ENCODE measurements at regions of chr2 and their contacts with region 1.

Region 1: GRCh38 chr2:197804049-197804757 is at the start of gene PLCL1:
- DNase-seq: peak; percentile 73 to 94 (median 91)
- ATAC-seq: peak; percentile 98
- H3K4me3 ChIP-seq: peak within 1 kb of the TSS; percentile 67
- H3K4me3 Mint-ChIP-seq: peak within 1 kb of the TSS; percentile 92 to 98 (median 96)
- H3K27ac ChIP-seq: peak within 1 kb of the TSS; percentile 89
- H3K27ac Mint-ChIP-seq: peak within 1 kb of the TSS; percentile 58 to 96 (median 92)
- H3K4me1 ChIP-seq: peaks cover 10 to 29% of the 10 kb centered on the region in 2 donors
- H3K4me1 Mint-ChIP-seq: peaks cover 33 to 55% (median 48%) of the 10 kb centered on the region in 7 donors
- H3K27me3 ChIP-seq: peaks cover 0 to 6% of the 10 kb centered on the region in 2 donors
- H3K27me3 Mint-ChIP-seq: peaks cover 0 to 49% (median 0%) of the 10 kb centered on the region in 5 donors
- total RNA-seq, gene PLCL1: 1.8 to 33.7 (median 28.5) TPM

Region 2: DNA sequence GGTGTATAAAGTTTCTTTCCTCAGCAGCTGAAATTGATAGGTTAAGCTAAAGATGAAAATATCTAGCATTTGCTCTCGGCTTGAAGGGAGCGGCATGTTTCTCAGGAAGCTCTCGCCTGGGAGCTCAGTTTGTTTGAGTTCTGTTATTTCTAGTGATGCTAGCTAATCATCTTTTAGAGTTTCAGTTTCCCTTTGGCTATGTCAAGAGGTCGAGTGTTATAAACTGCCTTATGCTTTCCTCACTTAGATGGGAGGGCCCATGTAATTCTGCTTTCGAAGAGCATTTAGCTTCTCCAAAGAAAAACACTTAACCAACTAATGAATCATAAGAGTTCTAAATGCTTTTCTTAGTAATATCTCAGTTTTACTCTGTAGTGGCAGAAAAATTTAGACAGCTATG is 33.8 kb after region 1 on chr2:
- CTCF ChIA-PET with region 1: interaction called, 8 read pairs
- POLR2A ChIA-PET with region 1: interaction called, 7 read pairs
- intact Hi-C with region 1: loop called (anchors 1 kb)
- DNase-seq: peak in 7 of 9 donors; percentile 41 to 71 (median 59)
- ATAC-seq: peak; percentile 88
- H3K4me3 ChIP-seq: peak overlapping the region; percentile 31
- H3K4me3 Mint-ChIP-seq: peak overlapping the region; percentile 65 to 84 (median 80)
- H3K27ac ChIP-seq: peak overlapping the region; percentile 75
- H3K27ac Mint-ChIP-seq: peak overlapping the region; percentile 79 to 98 (median 94)
- H3K4me1 ChIP-seq: peaks cover 0 to 55% of the 10 kb centered on the region in 2 donors
- H3K4me1 Mint-ChIP-seq: peaks cover 28 to 88% (median 67%) of the 10 kb centered on the region in 7 donors
- H3K27me3 ChIP-seq: no peaks in the 10 kb centered on the region
- H3K27me3 Mint-ChIP-seq: no peaks in the 10 kb centered on the region

Region 3: DNA sequence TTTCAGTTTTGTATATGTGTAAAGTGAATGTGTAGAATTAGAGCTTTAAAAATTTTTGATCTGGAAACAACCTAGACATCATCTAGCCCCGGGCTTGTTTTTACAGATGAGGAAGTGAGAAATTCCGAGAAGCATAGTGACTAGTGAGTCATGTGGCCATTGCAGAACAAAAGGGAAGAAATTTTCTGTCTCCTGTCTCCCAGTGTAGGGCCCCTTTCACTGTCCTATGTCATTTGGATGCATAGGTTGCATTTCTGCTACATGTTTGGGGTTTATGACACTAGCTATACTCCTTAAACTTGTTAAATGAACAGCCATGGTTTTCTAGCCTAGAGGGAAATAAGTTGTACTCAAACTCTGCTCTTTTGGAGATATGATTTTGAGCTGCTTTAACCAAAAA is 84.8 kb after region 1 on chr2:
- CTCF ChIA-PET with region 1: no interaction called
- POLR2A ChIA-PET with region 1: interaction called, 6 read pairs
- intact Hi-C with region 1: loop called (anchors 1 kb)
- DNase-seq: peak in 8 of 9 donors; percentile 31 to 77 (median 60)
- ATAC-seq: peak; percentile 90
- H3K4me3 ChIP-seq: no peak overlapping the region
- H3K4me3 Mint-ChIP-seq: peak overlapping the region; percentile 26 to 88 (median 72)
- H3K27ac ChIP-seq: peak overlapping the region; percentile 72
- H3K27ac Mint-ChIP-seq: peak overlapping the region; percentile 63 to 97 (median 89)
- H3K4me1 ChIP-seq: peaks cover 0 to 49% of the 10 kb centered on the region in 2 donors
- H3K4me1 Mint-ChIP-seq: peaks cover 27 to 90% (median 71%) of the 10 kb centered on the region in 7 donors
- H3K27me3 ChIP-seq: no peaks in the 10 kb centered on the region
- H3K27me3 Mint-ChIP-seq: no peaks in the 10 kb centered on the region

Region 4: DNA sequence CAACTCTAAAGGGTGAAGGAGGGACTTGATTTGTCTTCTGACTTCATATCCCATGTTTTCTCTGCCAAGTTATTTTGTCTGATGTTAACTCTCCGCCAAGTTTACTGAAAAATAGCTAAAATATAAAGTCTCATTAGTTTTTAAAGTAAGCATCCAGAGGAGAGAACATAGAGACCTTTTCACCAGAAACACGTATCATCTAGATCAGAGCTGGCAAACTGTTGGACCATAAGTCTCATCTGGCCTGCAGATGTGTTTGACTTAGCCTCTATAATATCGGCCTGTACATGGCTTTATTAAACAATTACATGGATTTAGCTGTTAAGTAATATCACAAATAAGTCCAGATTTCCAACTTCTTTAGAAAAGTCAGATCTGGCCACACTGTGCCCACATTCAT is 182.8 kb after region 1 on chr2:
- CTCF ChIA-PET with region 1: interaction called, 14 read pairs
- POLR2A ChIA-PET with region 1: no interaction called
- intact Hi-C with region 1: loop called in 1 of 2 experiments (anchors 1 kb)
- DNase-seq: no peak
- ATAC-seq: no peak
- H3K4me3 ChIP-seq: no peak overlapping the region
- H3K4me3 Mint-ChIP-seq: no peak overlapping the region
- H3K27ac ChIP-seq: no peak overlapping the region
- H3K27ac Mint-ChIP-seq: peak overlapping the region in 1 of 9 donors; percentile 25
- H3K4me1 ChIP-seq: peaks cover 0 to 4% of the 10 kb centered on the region in 2 donors
- H3K4me1 Mint-ChIP-seq: peaks cover 0 to 55% (median 28%) of the 10 kb centered on the region in 7 donors
- H3K27me3 ChIP-seq: no peaks in the 10 kb centered on the region
- H3K27me3 Mint-ChIP-seq: no peaks in the 10 kb centered on the region

Region 5: DNA sequence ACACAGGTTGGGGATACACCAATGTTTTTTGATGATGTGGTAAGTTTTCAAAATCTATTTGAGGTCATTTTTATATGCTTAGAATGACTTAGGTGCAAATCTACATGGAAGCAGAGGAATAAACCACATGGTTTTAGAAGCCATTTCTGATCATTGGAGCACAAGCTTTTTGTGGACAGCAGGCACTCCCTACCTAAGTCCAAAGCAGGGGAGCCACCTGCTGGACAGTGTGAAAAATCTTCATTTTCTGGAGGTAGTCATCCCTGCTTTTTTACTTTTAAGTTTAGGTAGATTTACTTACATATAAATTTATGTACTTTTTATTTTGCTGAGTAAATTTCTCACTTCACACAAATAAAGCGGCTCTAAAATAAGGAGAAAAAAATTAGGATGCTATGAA is 323.4 kb after region 1 on chr2:
- CTCF ChIA-PET with region 1: interaction called, 18 read pairs
- POLR2A ChIA-PET with region 1: no interaction called
- intact Hi-C with region 1: loop called (anchors 1 kb)
- DNase-seq: peak in 8 of 9 donors; percentile 24 to 66 (median 48)
- ATAC-seq: peak; percentile 81
- H3K4me3 ChIP-seq: no peak overlapping the region
- H3K4me3 Mint-ChIP-seq: no peak overlapping the region
- H3K27ac ChIP-seq: no peak overlapping the region
- H3K27ac Mint-ChIP-seq: peak overlapping the region in 1 of 9 donors; percentile 10
- H3K4me1 ChIP-seq: no peaks in the 10 kb centered on the region
- H3K4me1 Mint-ChIP-seq: peaks cover 0 to 21% (median 11%) of the 10 kb centered on the region in 7 donors
- H3K27me3 ChIP-seq: no peaks in the 10 kb centered on the region
- H3K27me3 Mint-ChIP-seq: peaks cover 0 to 3% (median 0%) of the 10 kb centered on the region in 5 donors

Region 6: DNA sequence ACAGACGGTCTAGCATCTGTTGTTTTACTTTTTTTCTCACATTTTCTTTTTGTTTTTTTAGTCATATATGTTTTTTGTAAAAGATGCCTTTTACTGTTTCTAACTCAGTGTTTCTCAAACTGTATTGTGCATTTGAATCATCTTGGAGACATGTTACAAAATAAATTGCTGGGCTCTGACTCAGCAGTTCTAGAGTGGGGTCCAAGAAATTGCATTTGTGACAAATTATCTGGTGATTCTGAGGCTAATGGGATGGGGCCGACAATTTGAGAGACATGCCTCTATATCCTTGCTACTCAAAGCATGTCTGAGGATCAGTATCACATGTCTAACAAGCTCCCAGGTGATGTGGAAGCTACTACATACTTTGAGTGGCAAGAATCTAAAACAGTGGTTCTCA is 478.9 kb after region 1 on chr2:
- CTCF ChIA-PET with region 1: no interaction called
- POLR2A ChIA-PET with region 1: no interaction called
- intact Hi-C with region 1: no loop called
- DNase-seq: no peak
- ATAC-seq: no peak
- H3K4me3 ChIP-seq: no peak overlapping the region
- H3K4me3 Mint-ChIP-seq: no peak overlapping the region
- H3K27ac ChIP-seq: no peak overlapping the region
- H3K27ac Mint-ChIP-seq: no peak overlapping the region
- H3K4me1 ChIP-seq: no peaks in the 10 kb centered on the region
- H3K4me1 Mint-ChIP-seq: no peaks in the 10 kb centered on the region
- H3K27me3 ChIP-seq: peaks cover 0 to 6% of the 10 kb centered on the region in 2 donors
- H3K27me3 Mint-ChIP-seq: peaks cover 15 to 49% (median 39%) of the 10 kb centered on the region in 5 donors